ENCODE measurements at regions of chr19 and their contacts with region 1.

Region 1: DNA sequence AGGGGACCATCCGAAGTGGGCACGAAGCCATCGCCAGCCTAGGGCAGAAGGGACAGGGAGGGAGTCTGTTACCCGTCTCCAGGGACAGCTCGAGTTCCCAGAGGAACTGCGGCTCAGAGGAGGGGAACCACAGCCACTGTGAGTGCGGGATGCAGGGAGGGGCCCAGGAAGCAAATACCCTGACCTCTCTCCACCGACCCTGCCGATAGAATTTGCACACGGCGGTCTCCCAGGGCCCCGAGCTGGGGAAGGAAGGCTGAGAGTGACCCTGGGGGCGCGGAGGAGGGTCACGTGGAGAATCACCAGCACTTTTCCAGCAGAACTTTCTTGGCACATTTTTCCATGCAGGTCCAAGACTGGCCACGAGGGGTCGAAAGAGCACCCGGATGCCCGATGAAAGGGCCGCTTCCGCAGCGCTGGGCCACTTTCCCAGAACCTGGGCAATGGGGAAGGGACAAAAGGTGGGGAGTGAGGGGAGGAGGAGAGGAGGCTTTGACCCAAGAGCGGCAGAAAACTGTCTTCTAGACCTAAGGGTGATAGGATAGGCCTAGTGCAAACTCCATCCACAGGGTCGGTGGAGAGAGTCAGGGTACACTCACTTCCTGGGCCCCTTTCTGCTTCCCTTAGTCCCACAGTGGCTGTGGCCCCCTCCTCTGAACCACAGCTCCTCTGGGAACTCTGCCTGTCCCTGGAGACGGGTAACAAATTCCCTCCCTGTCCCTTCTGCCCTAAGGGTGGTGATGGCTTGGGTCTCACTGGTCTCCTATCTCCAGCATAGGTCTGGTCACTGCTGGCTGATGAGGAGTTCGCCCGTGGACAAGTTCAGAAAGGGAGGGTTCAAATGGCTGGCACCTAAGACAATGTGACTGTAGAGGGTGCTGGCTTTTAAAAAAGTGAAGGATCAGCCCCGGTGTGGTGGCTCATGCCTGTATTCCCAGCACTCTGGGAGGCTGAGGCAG is 5.3 kb upstream of the GPR4 start:
- DNase-seq: peak; percentile 20 to 91 (median 64)

Region 2: GRCh38 chr19:45621389-45621788 is 14.0 kb after region 1 on chr19:
- intact Hi-C with region 1: no loop called
- DNase-seq: no peak

Region 3: DNA sequence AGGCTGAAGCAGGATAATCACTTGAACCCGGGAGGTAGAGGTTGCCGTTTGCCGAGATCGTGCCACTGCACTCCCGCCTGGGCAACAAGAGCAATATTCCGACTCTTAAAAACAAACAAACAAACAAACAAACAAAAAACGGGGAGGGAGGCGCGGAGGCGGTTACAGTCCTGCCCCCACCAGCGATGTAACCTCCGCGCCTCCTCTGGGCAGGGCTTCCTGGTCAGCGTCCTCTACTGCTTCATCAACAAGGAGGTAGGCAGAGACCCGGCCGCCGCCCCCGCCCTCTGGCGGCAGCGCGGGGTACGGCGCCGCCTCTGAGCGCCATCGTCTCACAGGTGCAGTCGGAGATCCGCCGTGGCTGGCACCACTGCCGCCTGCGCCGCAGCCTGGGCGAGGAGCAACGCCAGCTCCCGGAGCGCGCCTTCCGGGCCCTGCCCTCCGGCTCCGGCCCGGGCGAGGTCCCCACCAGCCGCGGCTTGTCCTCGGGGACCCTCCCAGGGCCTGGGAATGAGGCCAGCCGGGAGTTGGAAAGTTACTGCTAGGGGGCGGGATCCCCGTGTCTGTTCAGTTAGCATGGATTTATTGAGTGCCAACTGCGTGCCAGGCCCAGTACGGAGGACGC is 74.2 kb after region 1 on chr19:
- intact Hi-C with region 1: loop called (anchors 10 kb)
- DNase-seq: peak; percentile 77 to 99 (median 84)